ENCODE measurements at regions of chr7 and their contacts with region 1.

Region 1: GRCh38 chr7:24304494-24305095 is 20.6 kb downstream of the NPY start:
- DNase-seq: no peak

Region 2: GRCh38 chr7:24052572-24053223 is 251.9 kb before region 1 on chr7:
- intact Hi-C with region 1: no loop called
- DNase-seq: no peak

Region 3: GRCh38 chr7:24325708-24326107 is 21.1 kb after region 1 on chr7:
- intact Hi-C with region 1: loop called (anchors 2 kb)
- DNase-seq: no peak

Measured in posterior cingulate gyrus (tissue), 11 donors.